Endothelial cell of umbilical vein (primary cell): ENCODE measurements at regions of chr10 and their contacts with region 1.

Region 1: DNA sequence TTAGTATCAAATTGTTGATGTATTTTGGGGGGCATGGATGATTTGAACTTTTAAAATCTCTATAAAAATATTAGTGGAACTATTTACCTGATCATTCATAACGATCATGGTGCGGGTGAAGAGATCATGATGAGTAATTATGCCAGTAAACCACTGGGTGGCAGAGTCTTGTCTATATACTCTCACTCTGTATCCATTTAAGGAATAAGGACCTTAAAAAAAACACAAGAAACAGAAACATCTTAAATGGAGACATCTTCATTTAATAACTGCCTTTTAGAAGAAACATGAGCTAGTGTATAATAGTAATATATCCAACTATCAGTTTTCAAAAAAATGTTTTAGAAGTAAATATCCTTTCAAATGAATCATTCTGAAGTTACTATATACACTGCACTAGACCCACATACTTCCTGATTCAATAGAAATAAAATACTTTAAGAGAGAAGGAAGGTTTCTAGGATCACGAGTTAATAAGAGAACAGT is 84.0 kb downstream of the NRBF2 start:
- DNase-seq: peak; percentile 74
- H3K4me3 ChIP-seq: no peak overlapping the region
- H3K27ac ChIP-seq: peak overlapping the region; percentile 30
- H3K4me1 ChIP-seq: peaks cover 4% of the 10 kb centered on the region
- H3K27me3 ChIP-seq: no peaks in the 10 kb centered on the region
- CTCF ChIP-seq: peak; percentile 34 to 38
- POLR2A ChIP-seq: no peak

Region 2: DNA sequence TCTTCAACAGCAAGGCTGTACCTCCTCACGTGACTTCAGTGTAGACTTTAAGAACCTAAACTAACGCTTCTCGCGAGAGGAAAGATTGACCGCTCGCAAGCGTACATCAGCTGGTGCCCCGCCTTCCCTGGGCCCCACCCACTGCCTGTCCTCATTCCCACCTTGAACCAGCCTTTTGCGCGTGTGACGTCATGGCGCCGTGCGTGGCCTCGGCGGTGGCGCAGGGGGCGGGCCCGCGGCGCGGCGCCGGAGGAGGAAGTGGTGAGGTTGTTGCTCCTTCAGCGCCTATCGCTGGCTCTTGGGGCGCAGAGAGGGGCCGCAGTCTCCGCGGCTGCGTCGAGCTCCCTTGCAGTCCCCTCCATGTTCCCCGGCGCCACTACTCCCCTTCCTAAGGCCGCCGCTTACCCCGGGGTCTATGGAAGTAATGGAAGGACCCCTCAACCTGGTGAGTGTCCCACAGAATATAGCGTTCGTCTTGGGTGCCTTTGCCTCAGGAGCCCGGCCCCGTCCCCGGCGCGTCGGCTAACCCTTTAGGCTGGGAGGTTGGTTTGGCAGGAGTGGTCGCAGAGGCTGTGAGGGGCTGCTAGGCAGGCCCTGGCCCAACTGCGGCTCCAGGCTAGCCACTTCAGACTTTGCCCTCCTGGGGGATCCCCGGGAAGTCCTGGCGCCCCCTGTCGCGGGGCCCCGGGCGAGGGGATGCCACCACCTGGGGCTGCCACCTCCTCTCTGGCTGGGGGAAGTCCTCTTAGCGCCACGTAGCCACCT is 83.9 kb before region 1 on chr10 and contains the start of gene NRBF2:
- CTCF ChIA-PET with region 1: no interaction called
- POLR2A ChIA-PET with region 1: no interaction called
- dilution Hi-C with region 1: no loop called
- intact Hi-C with region 1: no loop called
- DNase-seq: peak; percentile 98
- H3K4me3 ChIP-seq: peak within 1 kb of the TSS; percentile 48 to 73 (median 69)
- H3K27ac ChIP-seq: peak within 1 kb of the TSS; percentile 78
- H3K4me1 ChIP-seq: peaks cover 7% of the 10 kb centered on the region
- H3K27me3 ChIP-seq: no peaks in the 10 kb centered on the region
- CTCF ChIP-seq: peak; percentile 10 to 24
- POLR2A ChIP-seq: peak; percentile 97
- total RNA-seq, gene NRBF2: 17.0 and 17.7 TPM in 2 replicates

Region 3: GRCh38 chr10:63200431-63200830 is 16.7 kb before region 1 on chr10:
- CTCF ChIA-PET with region 1: interaction called, 13 read pairs
- POLR2A ChIA-PET with region 1: no interaction called
- dilution Hi-C with region 1: no loop called
- intact Hi-C with region 1: no loop called
- DNase-seq: no peak
- H3K4me3 ChIP-seq: no peak overlapping the region
- H3K27ac ChIP-seq: no peak overlapping the region
- H3K4me1 ChIP-seq: no peaks in the 10 kb centered on the region
- H3K27me3 ChIP-seq: no peaks in the 10 kb centered on the region
- CTCF ChIP-seq: no peak
- POLR2A ChIP-seq: no peak

Region 4: DNA sequence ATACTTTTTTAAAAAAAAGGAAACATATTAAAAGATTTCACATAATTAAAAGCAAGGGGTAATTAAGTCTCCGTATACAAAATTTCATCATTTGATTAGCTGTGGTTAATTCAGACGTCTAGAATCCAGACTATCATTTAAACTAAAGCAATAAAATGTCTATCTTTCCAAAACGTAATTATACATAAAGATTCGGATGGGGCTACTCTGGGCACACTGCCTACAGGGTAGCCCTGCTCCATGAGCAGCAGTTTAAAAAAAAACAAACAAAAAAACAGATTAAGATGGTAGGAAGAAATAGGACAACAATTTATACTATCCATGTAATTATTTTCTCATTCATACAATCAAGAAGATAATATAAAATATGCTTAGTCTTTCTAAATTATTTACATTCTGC is 12.0 kb after region 1 on chr10:
- CTCF ChIA-PET with region 1: interaction called, 12 read pairs
- POLR2A ChIA-PET with region 1: no interaction called
- dilution Hi-C with region 1: no loop called
- intact Hi-C with region 1: no loop called
- DNase-seq: no peak
- H3K4me3 ChIP-seq: no peak overlapping the region
- H3K27ac ChIP-seq: no peak overlapping the region
- H3K4me1 ChIP-seq: peaks cover 4% of the 10 kb centered on the region
- H3K27me3 ChIP-seq: no peaks in the 10 kb centered on the region
- CTCF ChIP-seq: no peak
- POLR2A ChIP-seq: no peak

Region 5: GRCh38 chr10:63256009-63256773 is 39.0 kb after region 1 on chr10:
- CTCF ChIA-PET with region 1: interaction called, 6 read pairs
- POLR2A ChIA-PET with region 1: interaction called, 10 read pairs
- dilution Hi-C with region 1: no loop called
- intact Hi-C with region 1: no loop called
- DNase-seq: peak; percentile 42
- H3K4me3 ChIP-seq: no peak overlapping the region
- H3K27ac ChIP-seq: no peak overlapping the region
- H3K4me1 ChIP-seq: peaks cover 21% of the 10 kb centered on the region
- H3K27me3 ChIP-seq: no peaks in the 10 kb centered on the region
- CTCF ChIP-seq: no peak
- POLR2A ChIP-seq: no peak

Region 6: DNA sequence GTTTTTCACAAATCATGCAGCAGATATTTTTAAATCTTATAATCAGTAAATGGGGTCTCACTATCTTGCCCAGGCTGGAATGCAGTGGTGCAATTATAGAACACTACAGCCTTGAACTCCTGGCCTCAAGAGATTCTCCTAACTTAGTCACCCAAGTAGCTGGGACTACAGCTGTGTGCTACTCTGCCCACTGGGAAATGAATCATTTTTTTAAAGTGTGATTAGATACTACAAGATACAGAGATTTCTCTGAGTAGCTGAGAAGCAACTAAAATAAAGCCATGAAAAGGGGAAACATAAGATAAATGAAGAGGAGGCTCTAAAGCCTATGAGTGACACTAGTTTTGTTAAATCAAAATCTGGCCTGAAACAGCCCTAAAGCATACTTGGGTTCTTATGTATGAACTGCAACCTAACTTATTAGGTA is 128.9 kb after region 1 on chr10:
- CTCF ChIA-PET with region 1: no interaction called
- POLR2A ChIA-PET with region 1: no interaction called
- dilution Hi-C with region 1: no loop called
- intact Hi-C with region 1: no loop called
- DNase-seq: peak; percentile 37
- H3K4me3 ChIP-seq: no peak overlapping the region
- H3K27ac ChIP-seq: no peak overlapping the region
- H3K4me1 ChIP-seq: no peaks in the 10 kb centered on the region
- H3K27me3 ChIP-seq: no peaks in the 10 kb centered on the region
- CTCF ChIP-seq: no peak
- POLR2A ChIP-seq: no peak

Region 7: GRCh38 chr10:63376560-63377304 is 159.6 kb after region 1 on chr10:
- CTCF ChIA-PET with region 1: no interaction called
- POLR2A ChIA-PET with region 1: no interaction called
- dilution Hi-C with region 1: no loop called
- intact Hi-C with region 1: loop called (anchors 5 kb)
- DNase-seq: peak; percentile 37
- H3K4me3 ChIP-seq: no peak overlapping the region
- H3K27ac ChIP-seq: no peak overlapping the region
- H3K4me1 ChIP-seq: peaks cover 22% of the 10 kb centered on the region
- H3K27me3 ChIP-seq: no peaks in the 10 kb centered on the region
- CTCF ChIP-seq: no peak
- POLR2A ChIP-seq: no peak

Region 8: DNA sequence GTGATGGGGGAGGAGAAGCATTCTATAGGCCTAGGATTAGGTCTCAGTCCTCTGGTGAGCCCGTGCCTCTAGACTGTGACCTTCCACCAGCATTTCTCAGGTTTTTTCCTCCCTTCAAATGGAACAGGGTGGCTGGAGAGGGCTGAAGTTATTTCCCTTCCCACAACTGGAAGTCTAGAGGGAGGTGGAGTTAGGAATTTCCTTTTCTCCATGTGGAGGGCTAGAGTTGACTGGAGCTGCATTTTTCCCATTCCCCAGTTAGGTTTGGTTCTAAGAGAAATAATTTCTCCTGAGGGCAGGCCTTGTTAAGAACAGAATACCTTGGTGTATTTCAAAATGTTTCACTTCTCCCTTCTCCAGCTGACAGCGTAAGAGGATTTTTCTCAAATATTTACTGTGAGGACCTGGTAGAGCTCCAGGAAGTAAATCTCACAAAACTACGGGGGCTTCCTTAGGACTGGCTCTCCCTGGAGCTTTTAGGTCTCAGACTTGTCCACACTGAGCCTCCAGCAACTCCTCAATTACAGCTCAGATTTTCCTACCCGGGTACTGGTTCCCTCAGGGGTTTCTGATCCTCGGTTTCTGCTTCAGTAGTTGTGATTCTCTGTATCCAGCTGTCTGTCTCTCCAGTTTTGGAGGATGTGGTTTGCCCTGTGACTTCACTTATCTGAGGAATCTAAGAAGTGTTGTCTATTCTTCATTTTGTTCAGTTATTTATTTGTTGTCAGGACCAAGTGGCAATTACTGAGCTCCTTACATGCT is 298.0 kb after region 1 on chr10:
- CTCF ChIA-PET with region 1: no interaction called
- POLR2A ChIA-PET with region 1: no interaction called
- dilution Hi-C with region 1: no loop called
- intact Hi-C with region 1: no loop called
- DNase-seq: peak; percentile 49
- H3K4me3 ChIP-seq: no peak overlapping the region
- H3K27ac ChIP-seq: no peak overlapping the region
- H3K4me1 ChIP-seq: peaks cover 16% of the 10 kb centered on the region
- H3K27me3 ChIP-seq: no peaks in the 10 kb centered on the region
- CTCF ChIP-seq: no peak
- POLR2A ChIP-seq: no peak

Region 9: DNA sequence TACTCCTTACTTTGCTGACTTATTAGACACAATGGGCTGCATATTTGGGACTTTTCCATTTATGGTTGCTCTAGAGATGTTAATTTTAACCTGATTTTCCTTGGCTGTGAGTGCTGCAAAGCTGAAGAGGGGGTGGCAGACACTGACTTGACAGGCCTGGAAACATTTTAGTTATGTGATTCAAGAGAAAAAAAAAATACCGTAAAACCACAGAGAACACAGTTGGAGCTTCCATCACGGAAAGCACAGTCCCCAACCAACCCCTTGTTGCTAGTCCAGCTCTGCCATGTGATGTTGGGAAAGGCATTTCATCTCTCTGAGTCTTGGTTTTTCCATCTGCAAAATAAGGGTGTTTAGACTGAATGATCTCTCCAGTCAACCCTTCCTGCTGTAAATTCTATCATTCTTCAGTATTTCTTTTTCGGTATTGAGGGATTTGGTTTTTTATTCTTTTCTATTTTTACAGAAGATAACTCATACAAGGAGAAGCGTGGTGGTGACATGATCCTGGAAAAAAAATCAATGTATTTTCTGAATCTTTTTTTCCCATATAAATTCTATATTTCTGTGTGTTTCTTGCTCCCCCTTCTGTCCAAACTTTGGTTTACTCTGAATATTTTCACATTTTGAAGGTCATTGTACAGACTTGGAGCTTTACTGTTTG is 550.1 kb after region 1 on chr10:
- CTCF ChIA-PET with region 1: no interaction called
- POLR2A ChIA-PET with region 1: no interaction called
- dilution Hi-C with region 1: no loop called
- intact Hi-C with region 1: loop called (anchors 2 kb)
- DNase-seq: peak; percentile 70
- H3K4me3 ChIP-seq: no peak overlapping the region
- H3K27ac ChIP-seq: no peak overlapping the region
- H3K4me1 ChIP-seq: no peaks in the 10 kb centered on the region
- H3K27me3 ChIP-seq: no peaks in the 10 kb centered on the region
- CTCF ChIP-seq: peak in 1 of 2 donors; percentile 33
- POLR2A ChIP-seq: no peak